ENCODE measurements at regions of chr12 and their contacts with region 1.

Region 1: GRCh38 chr12:3299929-3300832 is 190.8 kb upstream of the PRMT8 start:
- DNase-seq: peak; percentile 94
- H3K4me3 ChIP-seq: peak overlapping the region; percentile 17
- H3K4me3 Mint-ChIP-seq: peak overlapping the region; percentile 62
- H3K27ac Mint-ChIP-seq: peak overlapping the region; percentile 55
- H3K4me1 ChIP-seq: no peaks in the 10 kb centered on the region
- H3K4me1 Mint-ChIP-seq: peaks cover 7% of the 10 kb centered on the region
- H3K27me3 ChIP-seq: peaks cover 2% of the 10 kb centered on the region
- H3K27me3 Mint-ChIP-seq: peaks cover 18% of the 10 kb centered on the region
- CTCF ChIP-seq: peak; percentile 99

Region 2: GRCh38 chr12:2783936-2784600 is 516.1 kb before region 1 on chr12:
- CTCF ChIA-PET with region 1: no interaction called
- POLR2A ChIA-PET with region 1: no interaction called
- intact Hi-C with region 1: no loop called
- DNase-seq: peak; percentile 67 to 76
- H3K4me3 ChIP-seq: no peak overlapping the region
- H3K4me3 Mint-ChIP-seq: peak overlapping the region; percentile 53
- H3K27ac Mint-ChIP-seq: no peak overlapping the region
- H3K4me1 ChIP-seq: peaks cover 24% of the 10 kb centered on the region
- H3K4me1 Mint-ChIP-seq: peaks cover 21% of the 10 kb centered on the region
- H3K27me3 ChIP-seq: 0 out of 2 replicates have a peak, but pooled peaks cover 2% of the 10 kb centered on the region
- H3K27me3 Mint-ChIP-seq: peaks cover 29% of the 10 kb centered on the region
- CTCF ChIP-seq: peak; percentile 95 to 97

Region 3: GRCh38 chr12:3129301-3130056 is 170.7 kb before region 1 on chr12:
- CTCF ChIA-PET with region 1: no interaction called
- POLR2A ChIA-PET with region 1: no interaction called
- intact Hi-C with region 1: no loop called
- DNase-seq: no peak
- H3K4me3 ChIP-seq: no peak overlapping the region
- H3K4me3 Mint-ChIP-seq: no peak overlapping the region
- H3K27ac Mint-ChIP-seq: no peak overlapping the region
- H3K4me1 ChIP-seq: no peaks in the 10 kb centered on the region
- H3K4me1 Mint-ChIP-seq: no peaks in the 10 kb centered on the region
- H3K27me3 ChIP-seq: no peaks in the 10 kb centered on the region
- H3K27me3 Mint-ChIP-seq: no peaks in the 10 kb centered on the region
- CTCF ChIP-seq: no peak

Region 4: DNA sequence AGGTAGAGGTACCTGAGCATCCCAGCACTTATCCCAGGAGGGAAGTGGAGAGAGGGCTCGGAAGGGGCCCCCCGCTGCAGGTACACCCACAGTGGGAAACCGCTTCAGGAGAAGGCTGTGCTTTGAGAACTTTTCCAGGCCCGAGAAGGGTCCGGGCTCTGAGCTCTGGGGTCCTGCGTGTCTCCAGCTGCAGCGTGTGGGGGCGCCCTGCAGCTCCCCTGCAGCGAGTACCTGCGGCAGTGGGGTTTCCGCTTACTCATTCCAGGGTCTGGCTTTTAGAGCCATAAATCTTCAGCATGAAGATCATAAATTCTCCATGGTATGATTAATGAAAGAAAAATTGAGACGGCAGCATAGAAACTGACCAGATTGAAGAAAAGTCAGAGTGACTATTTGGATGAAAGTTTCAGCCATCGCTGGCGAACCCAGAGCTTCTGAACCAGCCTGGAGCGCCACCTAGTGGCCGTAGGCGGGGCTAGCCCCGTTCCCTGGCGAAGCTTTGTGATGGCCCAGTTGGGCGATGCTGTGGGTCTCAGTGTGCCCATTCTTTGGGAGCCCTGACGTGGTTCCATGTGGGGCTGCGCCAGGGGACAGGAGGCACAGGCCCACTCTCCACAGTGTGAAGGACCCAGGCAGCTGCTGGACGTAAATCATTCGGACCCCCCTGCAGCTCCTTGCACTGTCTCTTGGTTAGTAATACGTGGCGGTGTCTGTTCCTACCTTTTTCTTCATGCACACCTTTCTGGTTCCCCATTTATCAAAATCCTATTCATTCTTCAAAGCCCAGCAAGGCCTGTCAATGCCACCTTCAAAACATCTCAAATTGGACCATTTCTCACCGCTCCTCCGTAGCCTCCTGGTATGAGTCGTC is 24.8 kb before region 1 on chr12:
- CTCF ChIA-PET with region 1: interaction called, 18 read pairs
- POLR2A ChIA-PET with region 1: no interaction called
- intact Hi-C with region 1: no loop called
- DNase-seq: peak; percentile 68 to 86
- H3K4me3 ChIP-seq: no peak overlapping the region
- H3K4me3 Mint-ChIP-seq: no peak overlapping the region
- H3K27ac Mint-ChIP-seq: no peak overlapping the region
- H3K4me1 ChIP-seq: no peaks in the 10 kb centered on the region
- H3K4me1 Mint-ChIP-seq: no peaks in the 10 kb centered on the region
- H3K27me3 ChIP-seq: no peaks in the 10 kb centered on the region
- H3K27me3 Mint-ChIP-seq: no peaks in the 10 kb centered on the region
- CTCF ChIP-seq: peak; percentile 99

Region 5: GRCh38 chr12:3333583-3333982 is 33.4 kb after region 1 on chr12:
- CTCF ChIA-PET with region 1: interaction called, 30 read pairs
- POLR2A ChIA-PET with region 1: no interaction called
- intact Hi-C with region 1: loop called (anchors 1 kb)
- DNase-seq: peak; percentile 77 to 79
- H3K4me3 ChIP-seq: no peak overlapping the region
- H3K4me3 Mint-ChIP-seq: no peak overlapping the region
- H3K27ac Mint-ChIP-seq: no peak overlapping the region
- H3K4me1 ChIP-seq: no peaks in the 10 kb centered on the region
- H3K4me1 Mint-ChIP-seq: peaks cover 7% of the 10 kb centered on the region
- H3K27me3 ChIP-seq: peaks cover 2% of the 10 kb centered on the region; the same call in 1 of the 2 replicates
- H3K27me3 Mint-ChIP-seq: peaks cover 25% of the 10 kb centered on the region
- CTCF ChIP-seq: peak in 1 of 2 experiments; percentile 34

Region 6: DNA sequence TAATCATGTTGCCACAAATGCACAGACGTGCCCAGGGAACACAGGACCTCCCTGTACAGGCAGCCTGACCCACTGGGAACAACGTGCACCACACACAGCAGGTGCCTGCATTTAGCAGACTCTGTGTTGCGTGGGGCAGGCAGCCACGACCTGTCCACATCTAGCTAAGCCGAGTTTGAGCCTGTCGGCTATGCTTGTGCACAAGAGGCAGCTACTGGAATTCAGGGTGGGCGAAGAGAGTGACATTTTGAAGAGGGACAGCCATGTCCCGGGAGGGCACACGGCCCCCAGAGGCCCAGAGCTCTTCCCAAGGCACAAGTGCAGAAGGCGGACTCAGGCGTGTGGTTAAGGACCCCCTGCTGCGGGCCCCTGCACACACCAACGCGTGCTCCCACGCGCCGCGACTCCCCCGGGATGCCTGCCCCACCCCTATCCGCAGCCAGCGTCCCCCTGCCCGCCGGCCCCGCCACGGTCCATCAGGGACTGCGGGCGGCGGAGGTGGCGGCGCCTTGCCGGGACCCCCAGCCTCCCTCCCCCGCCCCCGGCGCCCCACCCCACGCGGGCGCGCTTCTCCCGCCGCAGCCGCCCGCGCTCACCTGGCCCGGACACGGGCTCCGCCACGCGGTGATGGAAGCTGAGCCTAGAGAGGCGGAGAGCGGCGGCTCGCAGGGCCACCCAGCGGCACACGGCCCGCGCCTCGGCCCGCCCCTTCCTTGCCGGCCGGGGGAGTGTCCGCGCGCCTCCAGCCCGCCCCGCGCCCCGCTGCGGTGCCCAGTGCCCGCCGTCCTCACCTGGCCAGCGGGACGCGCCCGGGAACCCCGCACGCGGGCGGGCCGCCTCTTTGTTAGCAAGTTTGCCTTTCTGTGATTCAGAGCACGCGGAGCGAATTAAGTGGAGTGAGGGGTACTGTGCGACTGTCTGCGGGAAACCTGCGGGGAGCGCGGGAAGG is 65.6 kb after region 1 on chr12:
- CTCF ChIA-PET with region 1: interaction called, 5 read pairs
- POLR2A ChIA-PET with region 1: no interaction called
- intact Hi-C with region 1: loop called (anchors 5 kb)
- DNase-seq: peak in 1 of 2 experiments; percentile 62
- H3K4me3 ChIP-seq: peak overlapping the region; percentile 14
- H3K4me3 Mint-ChIP-seq: peak overlapping the region; percentile 69
- H3K27ac Mint-ChIP-seq: no peak overlapping the region
- H3K4me1 ChIP-seq: peaks cover under 1% of the 10 kb centered on the region; the same call in 1 of the 2 replicates
- H3K4me1 Mint-ChIP-seq: no peaks in the 10 kb centered on the region
- H3K27me3 ChIP-seq: peaks cover 13% of the 10 kb centered on the region
- H3K27me3 Mint-ChIP-seq: peaks cover 22% of the 10 kb centered on the region
- CTCF ChIP-seq: no peak

Region 7: GRCh38 chr12:3491938-3492792 is 192.0 kb after region 1 on chr12:
- CTCF ChIA-PET with region 1: interaction called, 12 read pairs
- POLR2A ChIA-PET with region 1: no interaction called
- intact Hi-C with region 1: no loop called
- DNase-seq: peak; percentile 61 to 86
- H3K4me3 ChIP-seq: no peak overlapping the region
- H3K4me3 Mint-ChIP-seq: no peak overlapping the region
- H3K27ac Mint-ChIP-seq: no peak overlapping the region
- H3K4me1 ChIP-seq: peaks cover 4% of the 10 kb centered on the region; the same call in 1 of the 2 replicates
- H3K4me1 Mint-ChIP-seq: no peaks in the 10 kb centered on the region
- H3K27me3 ChIP-seq: peaks cover 7% of the 10 kb centered on the region
- H3K27me3 Mint-ChIP-seq: peaks cover 41% of the 10 kb centered on the region
- CTCF ChIP-seq: no peak

Region 8: DNA sequence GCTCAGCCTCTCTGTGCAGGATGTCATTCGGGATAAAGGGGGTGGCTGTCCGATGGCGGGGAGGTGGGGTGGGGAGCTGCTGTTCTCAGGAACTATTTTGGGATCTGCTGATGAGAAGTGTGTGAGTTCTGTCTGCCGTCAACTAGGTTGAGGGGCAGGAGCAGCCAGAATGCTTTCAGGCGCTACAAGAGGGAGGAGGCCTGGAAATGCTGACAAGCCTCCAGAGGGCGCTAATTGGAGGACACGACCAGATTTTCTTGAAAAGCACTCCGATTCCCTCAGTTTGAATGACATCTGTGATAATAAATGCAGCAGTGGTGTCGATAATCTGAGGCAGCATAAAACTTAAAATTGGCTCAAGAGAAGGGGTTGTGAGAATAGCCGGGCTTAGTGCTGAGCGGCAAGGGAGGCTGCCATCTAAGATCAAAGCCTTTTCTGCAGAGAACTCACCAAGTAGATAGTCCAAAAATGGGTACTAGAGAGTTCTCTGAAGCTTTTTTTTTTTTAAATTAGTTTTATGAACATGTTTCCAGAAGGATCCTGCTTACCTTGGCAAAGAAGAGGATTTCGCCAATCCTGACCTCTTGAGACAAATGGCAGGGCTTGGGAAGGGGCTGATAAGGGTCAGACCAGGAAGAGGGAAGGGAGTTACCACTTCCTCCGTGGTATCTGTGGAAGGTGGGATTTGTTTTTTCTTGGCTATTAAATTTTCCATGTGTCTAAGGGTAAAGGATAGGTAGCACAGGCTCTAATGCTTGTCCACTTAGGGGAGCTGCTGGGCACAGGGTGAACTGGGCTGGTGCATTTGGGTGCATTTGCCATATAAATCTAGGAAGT is 358.4 kb after region 1 on chr12:
- CTCF ChIA-PET with region 1: interaction called, 5 read pairs
- POLR2A ChIA-PET with region 1: no interaction called
- intact Hi-C with region 1: loop called (anchors 2 kb)
- DNase-seq: peak in 1 of 2 experiments; percentile 61
- H3K4me3 ChIP-seq: no peak overlapping the region
- H3K4me3 Mint-ChIP-seq: no peak overlapping the region
- H3K27ac Mint-ChIP-seq: no peak overlapping the region
- H3K4me1 ChIP-seq: no peaks in the 10 kb centered on the region
- H3K4me1 Mint-ChIP-seq: peaks cover 6% of the 10 kb centered on the region
- H3K27me3 ChIP-seq: no peaks in the 10 kb centered on the region
- H3K27me3 Mint-ChIP-seq: no peaks in the 10 kb centered on the region
- CTCF ChIP-seq: peak in 1 of 2 experiments; percentile 64

Region 9: GRCh38 chr12:3777206-3777809 is 477.1 kb after region 1 on chr12:
- CTCF ChIA-PET with region 1: interaction called, 18 read pairs
- POLR2A ChIA-PET with region 1: no interaction called
- intact Hi-C with region 1: loop called (anchors 1 kb)
- DNase-seq: peak in 1 of 2 experiments; percentile 59
- H3K4me3 ChIP-seq: no peak overlapping the region
- H3K4me3 Mint-ChIP-seq: no peak overlapping the region
- H3K27ac Mint-ChIP-seq: no peak overlapping the region
- H3K4me1 ChIP-seq: no peaks in the 10 kb centered on the region
- H3K4me1 Mint-ChIP-seq: no peaks in the 10 kb centered on the region
- H3K27me3 ChIP-seq: 0 out of 2 replicates have a peak, but pooled peaks cover 1% of the 10 kb centered on the region
- H3K27me3 Mint-ChIP-seq: peaks cover 13% of the 10 kb centered on the region
- CTCF ChIP-seq: peak; percentile 80 to 82

Measured in Caco-2 (cell line).